Activated CD4-positive, alpha-beta T cell treated with anti-CD3 and anti-CD28 coated beads for 36 hours (primary cell): ENCODE measurements at regions of chr4 and their contacts with region 1.

Region 1: DNA sequence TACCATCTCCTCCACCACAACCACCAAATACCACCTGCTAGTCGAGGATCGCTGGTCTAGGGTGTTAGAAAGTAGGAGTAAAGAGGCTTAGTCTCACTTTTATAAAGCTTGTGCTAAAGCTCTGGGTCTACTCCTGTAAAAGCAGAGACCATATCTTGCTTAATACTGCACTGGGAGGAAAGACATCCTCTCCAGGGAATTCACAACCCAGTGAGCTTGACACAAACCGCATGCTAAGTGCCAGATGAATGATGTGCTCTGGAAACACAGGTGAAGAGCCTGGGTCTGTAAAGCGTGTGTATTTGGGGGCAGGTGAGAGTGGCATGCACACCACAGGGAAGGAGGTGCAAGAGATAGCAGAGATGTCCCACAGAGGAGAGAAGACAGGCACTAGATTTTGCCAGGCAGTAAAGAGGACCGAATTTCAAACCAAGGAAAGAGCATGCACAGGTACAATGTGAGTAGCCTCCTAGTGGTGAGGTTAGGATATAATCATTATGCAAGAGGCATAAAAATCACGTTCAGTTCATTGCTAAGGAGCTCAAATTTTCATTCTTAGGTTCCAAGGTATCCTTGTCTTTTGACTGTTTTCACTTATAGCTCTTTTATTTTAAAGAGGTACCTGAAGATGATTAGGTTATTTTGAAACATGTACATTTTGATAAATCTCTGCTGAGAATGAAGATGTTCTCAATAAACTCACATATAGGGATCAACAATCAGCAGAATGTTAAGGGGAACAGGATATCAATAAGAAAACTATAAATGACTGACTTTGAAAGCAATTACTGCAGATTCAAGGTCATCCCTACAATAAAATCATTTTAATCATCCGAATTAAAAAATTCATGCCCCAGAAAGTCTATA is 20.7 kb downstream of the TAPT1 start:
- DNase-seq: no peak
- ATAC-seq: peak; percentile 68
- H3K4me3 Mint-ChIP-seq: no peak overlapping the region
- H3K27ac Mint-ChIP-seq: peak overlapping the region; percentile 16
- H3K4me1 Mint-ChIP-seq: peaks cover 51% of the 10 kb centered on the region
- H3K27me3 Mint-ChIP-seq: no peaks in the 10 kb centered on the region

Region 2: GRCh38 chr4:16217300-16218051 is 11.9 kb after region 1 on chr4:
- CTCF ChIA-PET with region 1: interaction called, 16 read pairs
- POLR2A ChIA-PET with region 1: interaction called, 4 read pairs
- intact Hi-C with region 1: loop called (anchors 1 kb)
- DNase-seq: no peak
- ATAC-seq: peak; percentile 90
- H3K4me3 Mint-ChIP-seq: peak overlapping the region; percentile 57
- H3K27ac Mint-ChIP-seq: peak overlapping the region; percentile 80
- H3K4me1 Mint-ChIP-seq: peaks cover 75% of the 10 kb centered on the region
- H3K27me3 Mint-ChIP-seq: no peaks in the 10 kb centered on the region